Activated CD4-positive, alpha-beta T cell treated with anti-CD3 and anti-CD28 coated beads for 36 hours (primary cell): ENCODE measurements at regions of chr6 and their contacts with region 1.

Region 1: DNA sequence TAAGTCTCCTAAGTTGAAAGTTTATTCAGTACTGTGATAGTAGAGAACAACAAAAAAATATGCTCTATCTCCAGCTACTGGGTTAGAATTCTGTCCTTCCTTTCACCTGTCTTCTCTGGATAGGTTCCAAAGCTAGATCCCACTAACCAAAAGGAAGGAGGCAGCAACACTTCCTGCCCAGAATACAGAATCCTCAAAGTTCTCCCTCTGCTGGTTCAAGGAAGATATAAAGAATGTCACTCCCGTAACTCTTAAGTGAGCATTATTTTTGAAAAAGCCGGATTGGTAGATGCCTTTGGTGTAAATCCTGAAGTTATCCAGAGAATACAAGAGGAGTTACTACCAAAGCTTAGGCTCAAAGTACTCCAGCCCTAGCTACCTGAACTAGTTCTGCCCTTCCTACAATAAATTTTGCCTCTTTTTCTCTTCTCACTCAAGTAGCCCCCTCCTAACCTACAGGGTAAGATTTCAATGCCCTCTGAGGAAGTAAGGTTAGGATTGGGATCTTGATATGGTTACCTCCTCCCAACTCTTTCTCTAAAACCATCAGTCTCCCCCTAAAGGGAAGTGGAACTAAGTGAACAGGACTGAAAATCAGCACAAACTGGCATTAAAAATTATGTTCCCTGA is 26.0 kb upstream of the CRIP3 start:
- DNase-seq: no peak
- ATAC-seq: no peak
- H3K4me3 Mint-ChIP-seq: no peak overlapping the region
- H3K27ac Mint-ChIP-seq: no peak overlapping the region
- H3K4me1 Mint-ChIP-seq: peaks cover 25% of the 10 kb centered on the region
- H3K27me3 Mint-ChIP-seq: no peaks in the 10 kb centered on the region

Region 2: GRCh38 chr6:43263314-43264178 is 71.0 kb before region 1 on chr6:
- CTCF ChIA-PET with region 1: interaction called, 7 read pairs
- POLR2A ChIA-PET with region 1: no interaction called
- intact Hi-C with region 1: loop called in 1 of 2 experiments (anchors 1 kb)
- DNase-seq: peak; percentile 89
- ATAC-seq: peak; percentile 99
- H3K4me3 Mint-ChIP-seq: no peak overlapping the region
- H3K27ac Mint-ChIP-seq: no peak overlapping the region
- H3K4me1 Mint-ChIP-seq: peaks cover 3% of the 10 kb centered on the region
- H3K27me3 Mint-ChIP-seq: no peaks in the 10 kb centered on the region